ENCODE measurements at regions of chr18 and their contacts with region 1.

Region 1: GRCh38 chr18:50203801-50204604 is 9.1 kb upstream of the MYO5B start:
- DNase-seq: peak; percentile 56
- ATAC-seq: no peak
- H3K4me3 Mint-ChIP-seq: no peak overlapping the region
- H3K27ac Mint-ChIP-seq: no peak overlapping the region
- H3K4me1 Mint-ChIP-seq: peaks cover 9% of the 10 kb centered on the region
- H3K27me3 Mint-ChIP-seq: peaks cover 43% of the 10 kb centered on the region

Region 2: GRCh38 chr18:50009773-50010335 is 194.1 kb before region 1 on chr18:
- CTCF ChIA-PET with region 1: no interaction called
- POLR2A ChIA-PET with region 1: no interaction called
- intact Hi-C with region 1: loop called (anchors 2 to 5 kb)
- DNase-seq: peak; percentile 67
- ATAC-seq: peak; percentile 95
- H3K4me3 Mint-ChIP-seq: no peak overlapping the region
- H3K27ac Mint-ChIP-seq: no peak overlapping the region
- H3K4me1 Mint-ChIP-seq: no peaks in the 10 kb centered on the region
- H3K27me3 Mint-ChIP-seq: peaks cover 3% of the 10 kb centered on the region

Region 3: DNA sequence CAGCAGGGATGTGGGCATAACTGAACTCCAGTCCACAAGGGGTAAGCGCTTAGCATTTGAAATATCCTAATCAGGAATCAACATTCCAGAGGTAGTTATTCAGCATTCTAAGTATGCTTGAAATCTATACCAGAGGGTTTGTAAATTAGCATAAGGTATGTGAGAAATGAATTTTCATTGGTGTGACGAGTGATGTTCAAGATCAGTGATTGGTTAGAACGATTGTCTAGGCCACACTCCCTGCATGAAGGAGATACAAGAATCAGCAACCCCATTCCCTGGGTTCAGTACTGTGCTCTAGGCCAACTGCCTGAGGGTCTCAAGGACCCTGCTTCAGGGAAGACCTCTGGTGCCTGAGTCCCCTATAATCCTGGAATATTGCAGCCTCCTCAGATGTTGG is 398.5 kb after region 1 on chr18:
- CTCF ChIA-PET with region 1: no interaction called
- POLR2A ChIA-PET with region 1: no interaction called
- intact Hi-C with region 1: no loop called
- DNase-seq: no peak
- ATAC-seq: no peak
- H3K4me3 Mint-ChIP-seq: no peak overlapping the region
- H3K27ac Mint-ChIP-seq: no peak overlapping the region
- H3K4me1 Mint-ChIP-seq: no peaks in the 10 kb centered on the region
- H3K27me3 Mint-ChIP-seq: peaks cover 12% of the 10 kb centered on the region

Measured in activated CD4-positive, alpha-beta T cell treated with anti-CD3 and anti-CD28 coated beads for 36 hours (primary cell).